ENCODE measurements at regions of chr3 and their contacts with region 1.

Region 1: GRCh38 chr3:183188895-183189462 is 26.4 kb upstream of the LAMP3 start:
- DNase-seq: no peak
- H3K4me3 ChIP-seq: no peak overlapping the region
- H3K27me3 ChIP-seq: no peaks in the 10 kb centered on the region
- CTCF ChIP-seq: no peak; the same call in 1 of the 2 replicates

Region 2: DNA sequence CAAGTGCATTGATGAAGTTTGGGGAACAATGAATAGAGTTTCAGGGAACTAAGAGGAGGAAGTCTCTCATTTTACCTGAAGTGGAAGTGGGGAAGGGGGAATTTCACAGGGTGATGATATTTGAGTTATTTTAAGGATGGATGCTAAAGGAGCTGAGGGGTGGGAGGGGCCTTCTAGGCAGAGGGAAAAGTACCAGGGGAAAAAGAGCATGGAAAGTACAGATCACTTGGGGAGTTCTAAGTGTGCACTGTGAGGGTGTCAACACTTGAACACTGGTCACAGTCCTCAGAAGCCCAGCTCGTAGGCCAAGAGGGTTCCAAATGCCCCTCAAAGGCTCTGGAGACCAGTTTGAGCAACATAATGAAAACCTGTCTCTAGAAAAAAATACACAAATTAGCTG is 44.6 kb before region 1 on chr3:
- CTCF ChIA-PET with region 1: interaction called, 10 read pairs
- POLR2A ChIA-PET with region 1: no interaction called
- DNase-seq: no peak
- H3K4me3 ChIP-seq: no peak overlapping the region
- H3K27me3 ChIP-seq: peaks cover 4% of the 10 kb centered on the region; the same call in 1 of the 2 replicates
- CTCF ChIP-seq: no peak

Region 3: GRCh38 chr3:183214277-183214612 is 25.3 kb after region 1 on chr3:
- CTCF ChIA-PET with region 1: no interaction called
- POLR2A ChIA-PET with region 1: no interaction called
- DNase-seq: no peak
- H3K4me3 ChIP-seq: no peak overlapping the region
- H3K27me3 ChIP-seq: no peaks in the 10 kb centered on the region
- CTCF ChIP-seq: no peak

Region 4: GRCh38 chr3:183375787-183376186 is 186.8 kb after region 1 on chr3:
- CTCF ChIA-PET with region 1: interaction called, 284 read pairs
- POLR2A ChIA-PET with region 1: no interaction called
- DNase-seq: no peak
- H3K4me3 ChIP-seq: no peak overlapping the region
- H3K27me3 ChIP-seq: no peaks in the 10 kb centered on the region
- CTCF ChIP-seq: no peak